HEK293 (cell line): ENCODE measurements at regions of chr22 and their contacts with region 1.

Region 1: DNA sequence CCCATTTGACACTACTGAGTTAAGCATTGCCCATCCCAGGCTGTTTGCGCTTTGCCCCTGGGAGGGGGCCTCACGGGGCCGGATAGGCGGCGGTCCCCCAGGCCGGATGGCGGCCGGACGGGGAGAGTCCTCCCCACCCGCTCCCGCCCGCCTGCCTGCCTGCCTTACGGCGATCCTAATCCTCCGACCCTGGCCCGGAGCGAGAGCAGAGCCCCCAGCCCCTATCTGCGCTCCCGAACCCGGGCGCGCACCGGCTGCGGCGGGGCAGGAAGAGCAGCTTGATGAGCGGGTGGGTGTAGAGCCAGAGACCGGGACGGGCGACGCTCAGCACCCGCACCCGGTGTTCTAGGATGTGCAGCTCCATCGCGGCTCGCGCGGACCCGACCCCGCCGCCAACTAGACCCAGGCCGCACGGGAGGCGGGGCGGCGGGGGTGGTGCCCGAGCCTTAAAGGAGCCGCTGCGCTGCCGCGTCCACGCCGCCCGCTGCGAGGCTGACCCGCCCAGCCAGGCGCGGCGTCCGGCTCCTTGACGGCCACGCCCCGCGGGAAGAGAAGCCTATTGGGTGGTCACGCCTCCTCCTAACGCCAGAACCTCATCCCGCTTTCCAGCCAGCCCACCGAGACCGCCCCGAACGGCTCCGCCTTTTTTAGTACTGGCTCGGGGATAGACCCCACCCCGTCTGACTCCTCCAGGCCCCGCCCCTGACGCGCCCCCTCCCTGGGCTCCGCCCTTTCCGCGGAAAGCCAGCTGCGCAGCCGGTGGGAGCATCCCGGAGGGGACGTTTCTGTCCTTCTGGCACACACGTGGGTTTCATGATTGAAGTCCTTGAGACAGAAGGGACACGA is at the start of gene CASTOR1:
- H3K4me3 ChIP-seq: peak within 1 kb of the TSS; percentile 60
- H3K27ac ChIP-seq: no peak within 1 kb of the TSS
- H3K4me1 ChIP-seq: no peaks in the 10 kb centered on the region; the same call in 1 of the 2 replicates
- CTCF ChIP-seq: no peak

Region 2: GRCh38 chr22:30104501-30105156 is 184.7 kb before region 1 on chr22:
- CTCF ChIA-PET with region 1: interaction called, 38 read pairs
- POLR2A ChIA-PET with region 1: no interaction called
- H3K4me3 ChIP-seq: no peak overlapping the region
- H3K27ac ChIP-seq: no peak overlapping the region
- H3K4me1 ChIP-seq: no peaks in the 10 kb centered on the region
- CTCF ChIP-seq: no peak

Region 3: GRCh38 chr22:30262917-30263741 is 26.2 kb before region 1 on chr22:
- CTCF ChIA-PET with region 1: interaction called, 54 read pairs
- POLR2A ChIA-PET with region 1: interaction called, 4 read pairs
- H3K4me3 ChIP-seq: no peak overlapping the region
- H3K27ac ChIP-seq: no peak overlapping the region
- H3K4me1 ChIP-seq: no peaks in the 10 kb centered on the region
- CTCF ChIP-seq: peak; percentile 67

Region 4: GRCh38 chr22:30277547-30278344 is 11.6 kb before region 1 on chr22:
- CTCF ChIA-PET with region 1: interaction called, 30 read pairs
- POLR2A ChIA-PET with region 1: interaction called, 4 read pairs
- H3K4me3 ChIP-seq: no peak overlapping the region
- H3K27ac ChIP-seq: no peak overlapping the region
- H3K4me1 ChIP-seq: no peaks in the 10 kb centered on the region
- CTCF ChIP-seq: no peak

Region 5: DNA sequence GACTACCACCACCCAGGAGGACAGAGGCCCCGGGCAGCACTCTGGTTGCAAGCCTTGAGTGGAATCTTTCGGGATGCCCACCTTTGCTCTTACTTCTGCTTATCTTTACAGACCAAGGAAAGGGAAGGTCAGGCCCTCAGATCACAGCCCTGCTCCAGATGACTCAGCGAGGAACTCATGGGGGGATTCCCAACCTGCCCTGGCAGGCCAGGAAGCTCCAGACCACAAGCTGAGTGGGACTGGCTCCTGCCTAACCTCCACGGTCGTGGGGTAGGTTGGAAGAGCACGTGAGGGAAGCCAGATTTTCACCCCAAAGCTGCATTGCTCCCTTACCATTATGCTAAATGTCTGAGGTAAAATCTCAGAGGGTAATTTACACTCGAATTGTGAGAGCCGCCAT is 25.6 kb after region 1 on chr22:
- CTCF ChIA-PET with region 1: interaction called, 22 read pairs
- POLR2A ChIA-PET with region 1: interaction called, 5 read pairs
- H3K4me3 ChIP-seq: no peak overlapping the region
- H3K27ac ChIP-seq: no peak overlapping the region
- H3K4me1 ChIP-seq: no peaks in the 10 kb centered on the region
- CTCF ChIP-seq: no peak

Region 6: DNA sequence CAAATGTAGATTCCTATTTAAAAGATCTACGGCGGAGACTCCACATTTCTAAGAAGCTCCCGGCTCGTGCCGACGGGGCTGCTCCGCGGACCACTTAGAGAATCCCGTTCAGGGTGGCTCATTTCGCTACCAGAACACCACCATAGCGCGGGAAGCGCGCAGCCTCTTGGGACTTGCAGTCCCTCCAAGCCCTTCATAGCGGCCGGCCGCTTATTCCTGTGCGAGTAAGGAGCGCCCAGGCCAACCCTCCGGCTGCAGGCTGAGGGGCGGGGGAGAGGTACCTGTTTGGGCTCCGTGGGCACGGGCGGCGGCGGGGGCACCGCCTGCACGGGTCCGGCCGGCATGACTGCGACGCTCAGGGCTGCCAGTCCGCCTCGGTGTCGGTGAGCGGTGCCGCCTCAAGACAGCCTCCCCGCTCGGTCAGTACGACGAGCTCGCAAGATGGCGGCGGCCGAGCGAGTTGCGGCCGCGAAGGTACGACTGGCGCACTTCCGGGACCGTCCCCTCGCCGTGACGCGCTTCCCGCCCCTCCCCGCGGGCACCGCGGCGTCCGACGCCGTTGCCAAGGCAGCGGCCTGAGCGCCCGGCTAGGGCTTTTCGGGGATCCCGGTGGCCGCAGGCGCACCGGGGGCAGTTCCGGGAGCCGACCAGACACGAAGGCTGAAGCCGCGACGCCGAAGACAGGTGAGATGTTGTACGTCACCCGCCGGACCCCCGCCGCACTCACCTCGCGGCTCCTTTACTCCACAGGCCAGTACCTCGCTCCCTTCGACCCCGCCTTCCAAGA is 67.3 kb after region 1 on chr22 and contains the starts of genes CCDC157 and SF3A1:
- CTCF ChIA-PET with region 1: interaction called, 8 read pairs
- POLR2A ChIA-PET with region 1: interaction called, 25 read pairs
- H3K4me3 ChIP-seq: peak within 1 kb of the TSS; percentile 98
- H3K27ac ChIP-seq: peak within 1 kb of the TSS; percentile 82
- H3K4me1 ChIP-seq: peaks cover 5% of the 10 kb centered on the region; the same call in 1 of the 2 replicates
- CTCF ChIP-seq: peak; percentile 52; the same call in 1 of the 2 replicates

Region 7: DNA sequence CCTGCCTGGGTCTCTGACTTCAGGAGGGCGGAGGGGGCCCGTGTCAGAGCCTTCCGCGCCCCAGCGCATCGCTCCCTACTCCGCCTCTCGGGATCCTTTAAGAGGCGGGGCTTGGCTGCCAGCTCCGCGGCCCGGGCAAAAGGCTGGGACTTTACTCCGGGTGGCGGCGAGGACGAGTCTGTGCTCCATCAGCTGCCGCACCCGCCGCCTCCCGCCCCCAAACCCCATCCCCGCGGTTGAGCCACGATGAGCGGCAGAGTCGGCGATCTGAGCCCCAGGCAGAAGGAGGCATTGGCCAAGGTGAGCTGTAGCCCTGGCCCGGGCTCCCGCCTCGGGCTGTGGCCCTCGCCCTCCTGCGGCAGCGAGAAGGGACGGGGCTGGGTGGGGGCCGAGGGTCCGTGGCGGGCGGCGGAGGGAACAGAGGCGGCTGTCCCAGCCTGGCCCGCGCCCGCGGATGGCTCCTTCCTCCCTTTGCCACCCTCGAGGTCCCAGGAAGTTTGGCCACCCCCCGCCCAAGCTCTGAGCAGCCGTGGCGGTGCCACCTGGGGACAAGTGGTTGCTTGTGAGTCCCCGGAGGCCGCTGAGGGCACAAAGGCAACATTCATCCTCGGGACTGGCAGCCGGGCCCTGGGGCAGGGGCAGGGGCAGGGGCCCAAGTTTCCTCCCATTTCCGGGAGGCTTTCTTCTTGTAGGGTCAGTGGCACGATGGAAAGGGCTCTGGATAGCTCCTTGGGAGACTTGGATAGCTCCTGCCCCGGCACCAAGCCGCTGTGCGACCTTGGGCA is 107.7 kb after region 1 on chr22 and contains the start of gene SEC14L2:
- CTCF ChIA-PET with region 1: interaction called, 80 read pairs
- POLR2A ChIA-PET with region 1: interaction called, 5 read pairs
- H3K4me3 ChIP-seq: peak within 1 kb of the TSS; percentile 80
- H3K27ac ChIP-seq: no peak within 1 kb of the TSS; the same call in 1 of the 2 replicates
- H3K4me1 ChIP-seq: peaks cover 3% of the 10 kb centered on the region; the same call in 1 of the 2 replicates
- CTCF ChIP-seq: no peak